K562 (cell line): ENCODE measurements at regions of chr1 and their contacts with region 1.

Region 1: DNA sequence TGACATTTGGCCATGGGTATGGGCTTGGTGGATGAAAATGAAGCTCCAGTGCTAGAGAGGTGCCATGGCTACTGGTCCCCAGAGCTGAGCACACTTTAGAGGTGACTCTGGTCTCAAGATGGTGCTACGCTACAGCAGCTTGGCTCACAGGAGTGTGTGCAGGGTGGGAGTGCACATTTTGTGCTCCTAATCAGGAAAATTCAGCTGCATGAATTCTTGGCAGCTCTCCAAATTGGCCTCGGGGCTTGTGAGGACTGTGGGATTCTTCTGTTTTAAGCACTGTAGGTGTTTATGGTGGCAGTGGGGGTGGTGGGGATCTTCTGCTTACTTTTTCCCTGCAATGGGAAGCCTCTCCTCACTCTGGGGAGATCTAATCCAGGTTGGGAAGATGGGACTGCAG is 17.3 kb upstream of the TIPRL start:
- DNase-seq: peak in 3 of 4 experiments; percentile 34 to 95 (median 76)
- ATAC-seq: peak; percentile 98
- H3K4me3 ChIP-seq: no peak overlapping the region
- H3K27ac ChIP-seq: no peak overlapping the region; the same call in 2 of the 3 replicates
- H3K4me1 ChIP-seq: peaks cover 9% of the 10 kb centered on the region in 2 experiments; a peak in 4 of 5 replicates
- H3K27me3 ChIP-seq: no peaks in the 10 kb centered on the region
- CTCF ChIP-seq: peak; percentile 39 to 68 (median 53); a peak in 5 of 6 replicates
- EP300 ChIP-seq: peak; percentile 80
- POLR2A ChIP-seq: no peak
- RAD21 ChIP-seq: peak in 1 of 2 experiments; percentile 64; a peak in 2 of 4 replicates

Region 2: GRCh38 chr1:168121401-168122011 is 40.0 kb before region 1 on chr1:
- CTCF ChIA-PET with region 1: no interaction called
- POLR2A ChIA-PET with region 1: no interaction called
- in situ Hi-C with region 1: no loop called
- intact Hi-C with region 1: no loop called
- DNase-seq: no peak
- ATAC-seq: no peak
- H3K4me3 ChIP-seq: no peak overlapping the region
- H3K27ac ChIP-seq: no peak overlapping the region
- H3K4me1 ChIP-seq: no peaks in the 10 kb centered on the region; a peak in 3 of 5 replicates
- H3K27me3 ChIP-seq: peaks cover 5 to 11% of the 10 kb centered on the region in 2 experiments; a peak in 4 of 5 replicates
- CTCF ChIP-seq: no peak
- EP300 ChIP-seq: no peak
- POLR2A ChIP-seq: no peak
- RAD21 ChIP-seq: no peak

Region 3: GRCh38 chr1:168225476-168226190 is 64.2 kb after region 1 on chr1 and contains the start of gene SFT2D2:
- CTCF ChIA-PET with region 1: no interaction called
- POLR2A ChIA-PET with region 1: interaction called, 3 read pairs
- in situ Hi-C with region 1: no loop called
- intact Hi-C with region 1: loop called (anchors 5 kb)
- DNase-seq: peak; percentile 91 to 96 (median 95)
- ATAC-seq: peak; percentile 95
- H3K4me3 ChIP-seq: peak within 1 kb of the TSS; percentile 80
- H3K27ac ChIP-seq: peak within 1 kb of the TSS; percentile 91
- H3K4me1 ChIP-seq: peaks cover 20 to 30% of the 10 kb centered on the region in 2 experiments
- H3K27me3 ChIP-seq: no peaks in the 10 kb centered on the region
- CTCF ChIP-seq: no peak
- EP300 ChIP-seq: no peak
- POLR2A ChIP-seq: peak; percentile 96
- RAD21 ChIP-seq: no peak
- polyA plus RNA-seq, gene SFT2D2: 3.4 to 6.1 TPM

Region 4: DNA sequence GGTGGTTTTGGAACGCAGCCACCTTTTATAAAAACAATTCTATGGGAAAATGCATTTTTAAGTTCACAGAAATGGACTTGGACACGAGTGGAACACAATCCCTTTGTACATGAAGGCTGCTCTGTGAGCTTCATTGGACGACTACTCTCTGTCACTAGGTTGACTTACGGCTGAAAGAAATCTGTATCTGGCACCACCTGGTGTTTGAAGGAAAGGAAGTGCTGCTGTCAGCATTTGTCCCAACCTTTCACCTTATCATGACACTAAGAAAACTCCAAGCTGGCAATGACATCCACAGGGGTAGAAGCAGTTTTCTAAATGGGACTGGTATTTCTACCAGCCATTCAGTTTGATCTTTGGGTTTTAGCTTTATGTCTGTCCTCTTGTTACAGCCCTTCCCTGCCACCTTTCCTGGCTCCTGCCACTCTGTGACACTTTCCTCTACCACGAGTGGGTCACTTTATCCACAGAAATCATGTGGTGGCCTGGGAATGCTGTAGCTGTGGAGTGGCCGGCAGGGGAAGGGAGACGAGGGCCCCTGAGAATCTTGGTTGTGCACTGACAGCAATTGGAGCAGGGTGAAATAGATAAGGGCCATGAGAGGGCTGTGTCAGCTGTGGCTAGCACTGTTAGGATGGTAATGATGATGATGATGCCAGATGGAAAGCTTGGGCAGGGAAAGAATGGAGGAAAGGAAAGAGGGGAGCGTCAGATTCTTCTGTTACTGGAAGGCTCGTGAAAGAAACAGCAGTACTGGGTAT is 204.4 kb after region 1 on chr1:
- CTCF ChIA-PET with region 1: no interaction called
- POLR2A ChIA-PET with region 1: no interaction called
- in situ Hi-C with region 1: no loop called
- intact Hi-C with region 1: loop called (anchors 1 kb)
- DNase-seq: peak; percentile 57 to 77 (median 68)
- ATAC-seq: peak; percentile 92
- H3K4me3 ChIP-seq: no peak overlapping the region
- H3K27ac ChIP-seq: no peak overlapping the region
- H3K4me1 ChIP-seq: peaks cover 4 to 19% of the 10 kb centered on the region in 2 experiments; a peak in 3 of 5 replicates
- H3K27me3 ChIP-seq: peaks cover 0 to 2% of the 10 kb centered on the region in 2 experiments; a peak in 2 of 5 replicates
- CTCF ChIP-seq: peak; percentile 62 to 71 (median 69)
- EP300 ChIP-seq: no peak; the same call in 1 of the 2 replicates
- POLR2A ChIP-seq: no peak
- RAD21 ChIP-seq: peak; percentile 52 to 75